Panc1 (cell line): ENCODE measurements at regions of chr1 and their contacts with region 1.

Region 1: GRCh38 chr1:153677718-153678505 is 576 bp upstream of the NPR1 start:
- DNase-seq: peak; percentile 51
- ATAC-seq: peak; percentile 76
- H3K4me3 ChIP-seq: peak overlapping the region; percentile 33 to 63
- H3K27ac ChIP-seq: no peak overlapping the region
- H3K4me1 ChIP-seq: peaks cover 10% of the 10 kb centered on the region; the same call in 1 of the 2 replicates
- H3K27me3 ChIP-seq: peaks cover 7% of the 10 kb centered on the region
- CTCF ChIP-seq: peak; percentile 98

Region 2: DNA sequence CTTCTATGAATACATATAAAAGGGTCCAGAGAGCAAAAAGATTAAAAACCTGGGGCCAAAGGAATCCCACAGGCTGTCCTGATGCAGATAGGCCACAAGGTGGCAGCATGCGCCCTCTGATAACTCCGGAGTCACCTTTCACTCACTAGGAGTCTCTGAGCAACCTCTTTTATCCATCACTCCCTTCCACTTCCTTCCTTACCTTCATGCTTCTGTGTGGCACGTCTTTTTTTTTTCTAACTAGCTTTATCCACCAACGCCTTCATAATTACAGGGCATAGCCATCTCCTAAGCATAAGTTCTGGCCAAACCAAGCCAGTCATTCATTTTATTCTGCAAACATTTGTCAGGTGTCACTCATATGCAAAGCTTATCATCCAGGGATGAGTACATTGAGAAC is 325.4 kb before region 1 on chr1:
- CTCF ChIA-PET with region 1: interaction called, 19 read pairs
- POLR2A ChIA-PET with region 1: no interaction called
- in situ Hi-C with region 1: no loop called
- intact Hi-C with region 1: no loop called
- DNase-seq: no peak
- ATAC-seq: peak; percentile 64; the same call in 1 of the 2 replicates
- H3K4me3 ChIP-seq: no peak overlapping the region
- H3K27ac ChIP-seq: no peak overlapping the region
- H3K4me1 ChIP-seq: 0 out of 2 replicates have a peak, but pooled peaks cover 3% of the 10 kb centered on the region
- H3K27me3 ChIP-seq: peaks cover 10% of the 10 kb centered on the region
- CTCF ChIP-seq: peak; percentile 93

Region 3: DNA sequence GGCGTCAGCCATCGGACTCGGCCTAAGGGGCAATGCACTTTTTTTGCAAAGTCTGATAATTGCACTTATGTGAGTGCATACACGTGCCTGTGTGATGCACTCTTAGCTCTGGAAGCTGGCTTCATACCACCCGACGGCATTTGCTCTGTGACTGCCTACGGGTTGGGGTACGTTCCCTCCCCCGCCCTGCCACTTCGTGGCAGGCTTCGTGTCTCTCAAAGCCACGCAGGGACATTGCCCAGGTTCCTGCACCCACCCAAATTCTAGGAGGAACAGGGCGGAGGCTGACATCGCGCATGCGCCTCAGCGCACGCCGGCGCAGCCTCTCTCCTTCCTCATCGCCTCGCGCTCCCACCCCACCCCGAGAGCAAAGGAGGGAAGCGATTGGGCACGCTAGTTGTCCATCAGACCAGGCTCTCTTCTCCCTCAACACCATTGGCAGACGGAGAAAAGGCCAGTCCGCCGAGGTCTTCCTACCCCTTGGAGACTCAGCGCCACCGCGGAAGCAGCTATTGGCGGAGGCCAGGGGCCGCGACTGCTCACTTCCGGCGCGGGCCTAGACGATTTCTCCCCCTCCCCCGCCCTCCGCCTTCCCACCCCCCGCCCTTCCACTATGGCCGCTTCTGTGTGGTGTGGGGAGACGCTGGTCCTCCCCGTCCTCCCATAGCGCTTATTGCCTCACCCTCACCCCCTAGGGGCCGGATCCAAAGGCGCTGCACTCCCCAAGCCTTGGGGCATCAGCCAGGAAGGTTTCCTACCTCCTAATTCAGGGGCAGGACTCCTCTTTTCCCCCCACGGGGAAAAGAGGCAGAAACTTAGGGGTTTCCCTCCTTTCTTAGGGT is 49.8 kb after region 1 on chr1 and contains the start of gene INTS3:
- CTCF ChIA-PET with region 1: no interaction called
- POLR2A ChIA-PET with region 1: interaction called, 12 read pairs
- in situ Hi-C with region 1: no loop called
- intact Hi-C with region 1: no loop called
- DNase-seq: peak; percentile 99
- ATAC-seq: peak; percentile 100
- H3K4me3 ChIP-seq: peak within 1 kb of the TSS; percentile 89 to 100
- H3K27ac ChIP-seq: peak within 1 kb of the TSS; percentile 98
- H3K4me1 ChIP-seq: peaks cover 14% of the 10 kb centered on the region
- H3K27me3 ChIP-seq: no peaks in the 10 kb centered on the region
- CTCF ChIP-seq: no peak
- total RNA-seq, gene INTS3: 77.3 TPM

Region 4: DNA sequence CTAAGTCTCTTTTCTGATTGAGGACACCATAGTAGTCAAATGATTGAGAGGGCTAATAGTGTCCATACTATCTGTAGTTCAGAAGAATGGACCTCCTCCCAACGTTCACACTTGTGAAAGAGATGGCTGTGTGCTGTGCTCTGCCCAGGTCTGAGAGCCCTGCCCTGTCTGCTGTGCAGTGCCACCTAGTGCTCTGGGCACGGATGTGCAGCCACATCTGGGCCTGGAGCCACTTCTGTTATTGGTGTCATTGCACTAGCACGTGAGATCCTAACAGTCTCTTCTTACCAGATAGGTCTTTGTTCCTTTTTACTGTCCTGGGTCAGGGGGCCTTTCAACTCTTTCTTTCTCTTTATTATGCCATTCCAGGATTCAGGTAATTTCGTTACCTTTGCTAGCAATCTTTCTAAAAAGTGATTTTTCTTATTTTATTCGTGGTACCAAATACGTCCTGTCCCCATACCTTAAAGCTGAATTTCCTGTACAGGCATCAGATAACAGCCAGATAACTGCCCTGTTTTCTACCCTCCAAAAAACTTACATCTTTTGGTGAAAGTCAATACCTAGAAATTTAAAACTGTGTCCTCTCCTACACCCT is 71.6 kb after region 1 on chr1:
- CTCF ChIA-PET with region 1: no interaction called
- POLR2A ChIA-PET with region 1: no interaction called
- in situ Hi-C with region 1: no loop called
- intact Hi-C with region 1: loop called (anchors 1 kb)
- DNase-seq: peak; percentile 67
- ATAC-seq: peak; percentile 99
- H3K4me3 ChIP-seq: no peak overlapping the region
- H3K27ac ChIP-seq: no peak overlapping the region
- H3K4me1 ChIP-seq: no peaks in the 10 kb centered on the region
- H3K27me3 ChIP-seq: no peaks in the 10 kb centered on the region
- CTCF ChIP-seq: peak; percentile 96

Region 5: GRCh38 chr1:153775458-153776327 is 97.8 kb after region 1 on chr1:
- CTCF ChIA-PET with region 1: interaction called, 3 read pairs
- POLR2A ChIA-PET with region 1: interaction called, 3 read pairs
- in situ Hi-C with region 1: no loop called
- intact Hi-C with region 1: loop called (anchors 5 kb)
- DNase-seq: no peak
- ATAC-seq: peak; percentile 73
- H3K4me3 ChIP-seq: peak overlapping the region; percentile 60 to 61
- H3K27ac ChIP-seq: peak overlapping the region; percentile 51; the same call in 1 of the 2 replicates
- H3K4me1 ChIP-seq: peaks cover 8% of the 10 kb centered on the region
- H3K27me3 ChIP-seq: no peaks in the 10 kb centered on the region
- CTCF ChIP-seq: no peak

Region 6: DNA sequence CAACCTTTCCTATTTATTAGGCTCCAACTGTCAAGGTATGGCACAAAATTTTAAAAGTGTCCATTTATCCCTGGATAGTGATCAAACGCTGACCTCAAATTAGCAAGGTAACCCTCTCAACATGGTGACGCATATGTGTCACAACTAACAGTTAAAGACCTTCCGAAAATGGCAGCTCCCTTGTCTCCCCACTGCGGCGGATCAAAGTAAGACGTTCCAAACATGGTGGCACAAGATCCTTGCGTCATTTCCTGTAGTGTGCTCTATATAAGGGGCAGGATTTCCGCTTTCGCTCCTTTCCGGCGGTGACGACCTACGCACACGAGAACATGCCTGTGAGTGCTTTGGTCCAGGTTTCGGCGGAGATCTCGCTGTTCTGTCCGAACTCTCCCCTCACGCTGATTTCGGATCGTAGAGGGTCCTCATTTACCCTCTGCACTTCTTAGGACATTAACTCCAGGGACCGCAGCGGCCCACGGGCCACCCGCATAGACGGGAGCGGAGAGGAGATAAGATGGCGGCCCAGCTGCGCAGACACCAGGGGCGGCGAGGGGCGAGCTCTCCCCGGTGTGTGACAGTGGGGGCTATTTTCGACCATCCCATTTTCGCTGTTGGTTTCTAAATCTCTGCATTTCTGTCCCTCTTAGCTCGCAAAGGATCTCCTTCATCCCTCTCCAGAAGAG is 312.7 kb after region 1 on chr1 and contains the start of gene RPS27:
- CTCF ChIA-PET with region 1: no interaction called
- POLR2A ChIA-PET with region 1: no interaction called
- in situ Hi-C with region 1: no loop called
- intact Hi-C with region 1: loop called (anchors 5 kb)
- DNase-seq: peak; percentile 95
- ATAC-seq: peak; percentile 80
- H3K4me3 ChIP-seq: peak within 1 kb of the TSS; percentile 87 to 92
- H3K27ac ChIP-seq: peak within 1 kb of the TSS; percentile 97
- H3K4me1 ChIP-seq: peaks cover 13% of the 10 kb centered on the region
- H3K27me3 ChIP-seq: no peaks in the 10 kb centered on the region
- CTCF ChIP-seq: no peak
- total RNA-seq, gene RPS27: 1,095 TPM